G401 (cell line): ENCODE measurements at regions of chr14 and their contacts with region 1.

Region 1: DNA sequence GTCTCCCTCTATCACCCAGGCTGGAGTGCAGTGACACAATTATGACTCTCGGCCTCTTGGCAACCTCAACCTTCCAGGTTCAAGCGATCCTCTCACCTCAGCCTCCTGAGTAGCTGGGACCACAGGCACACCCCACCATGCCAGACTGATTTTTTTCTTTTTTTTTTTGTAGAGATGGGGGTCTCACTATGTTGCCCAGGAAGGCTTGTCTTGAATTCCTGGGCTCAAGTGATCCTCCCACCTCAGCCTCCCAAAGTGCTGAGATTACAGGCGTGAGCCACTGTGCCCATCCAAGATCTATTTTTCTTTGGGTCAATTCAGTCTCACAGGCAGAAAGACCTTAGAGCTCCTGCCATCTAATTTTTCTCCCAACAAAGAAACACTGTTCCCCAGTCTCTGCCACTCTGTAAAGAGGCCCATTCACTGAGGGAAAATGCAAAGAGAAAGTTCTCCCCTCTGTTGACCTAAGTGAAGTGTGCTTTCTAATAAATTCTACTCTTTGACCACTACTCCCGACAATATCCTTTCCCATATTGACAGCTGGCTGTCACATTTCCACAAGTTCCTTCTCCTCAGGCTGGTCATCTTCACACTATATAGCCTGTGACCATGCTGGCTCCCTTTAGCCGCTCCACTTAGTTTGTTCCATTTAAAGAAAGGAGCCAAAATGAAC is 23.3 kb downstream of the TMED8 start:
- DNase-seq: no peak

Region 2: DNA sequence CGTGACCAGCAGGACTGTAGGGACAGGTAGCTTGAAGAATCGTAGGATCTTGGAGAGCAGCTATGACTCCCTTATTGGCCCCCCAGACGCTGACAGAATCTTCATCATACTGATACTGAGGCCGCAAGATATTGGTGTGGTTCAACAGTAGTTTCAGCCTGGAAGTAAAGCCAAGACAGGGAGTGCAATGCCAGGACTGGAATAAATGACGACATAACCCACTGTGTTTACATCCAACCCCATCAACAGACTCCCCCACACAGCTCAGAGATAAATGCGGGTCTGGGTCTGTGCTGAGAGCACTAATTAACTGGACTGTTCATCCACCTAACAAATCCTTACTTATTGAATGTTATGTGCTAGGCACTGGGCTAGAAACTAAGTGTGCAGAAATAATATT is 53.1 kb after region 1 on chr14:
- in situ Hi-C with region 1: no loop called
- DNase-seq: no peak

Region 3: DNA sequence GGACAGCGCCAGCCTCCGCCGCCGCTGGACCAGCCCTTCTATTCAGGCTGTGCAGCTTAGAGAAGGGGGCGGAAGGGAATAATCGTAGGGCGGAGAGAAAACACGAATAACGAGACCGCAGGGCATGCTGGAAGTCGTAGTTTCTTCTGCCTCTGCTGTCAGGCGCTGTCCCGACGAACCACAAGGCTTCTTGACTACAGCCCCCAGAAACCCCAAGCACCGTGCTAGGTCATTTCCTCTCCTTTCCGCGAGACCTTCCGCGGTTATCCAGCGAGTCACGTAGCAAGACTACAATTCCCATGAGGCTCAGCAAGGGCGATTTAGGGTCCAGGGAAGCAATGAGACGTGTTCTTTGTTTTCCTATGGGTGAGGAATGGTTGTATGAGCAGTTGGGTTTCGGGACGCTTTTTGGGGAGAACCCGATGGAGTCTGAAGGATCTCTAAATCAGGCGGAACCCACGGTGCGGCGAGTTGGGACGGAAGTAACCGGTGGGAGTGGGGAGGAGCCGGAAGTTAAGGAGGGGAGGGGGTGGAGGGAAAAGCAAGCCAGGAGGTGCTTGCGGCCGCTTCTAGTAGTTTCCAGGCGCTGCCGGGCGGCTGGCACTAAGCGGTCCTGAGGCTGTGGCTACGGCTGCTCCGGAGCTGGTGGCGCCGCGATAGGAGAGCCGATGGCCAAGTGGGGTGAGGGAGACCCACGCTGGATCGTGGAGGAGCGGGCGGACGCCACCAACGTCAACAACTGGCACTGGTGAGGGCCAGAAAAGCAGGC is 104.1 kb after region 1 on chr14 and contains the starts of genes AHSA1 and VIPAS39:
- in situ Hi-C with region 1: loop called (anchors 5 kb)
- DNase-seq: peak; percentile 100
- total RNA-seq, gene AHSA1: 141 and 215 TPM in 2 replicates
- total RNA-seq, gene VIPAS39: 29.0 and 30.2 TPM in 2 replicates

Region 4: GRCh38 chr14:77593501-77593961 is 239.9 kb after region 1 on chr14:
- in situ Hi-C with region 1: no loop called
- DNase-seq: no peak